Activated naive CD4-positive, alpha-beta T cell treated with anti-CD3 and anti-CD28 coated beads for 36 hours (primary cell): ENCODE measurements at regions of chr14 and their contacts with region 1.

Region 1: DNA sequence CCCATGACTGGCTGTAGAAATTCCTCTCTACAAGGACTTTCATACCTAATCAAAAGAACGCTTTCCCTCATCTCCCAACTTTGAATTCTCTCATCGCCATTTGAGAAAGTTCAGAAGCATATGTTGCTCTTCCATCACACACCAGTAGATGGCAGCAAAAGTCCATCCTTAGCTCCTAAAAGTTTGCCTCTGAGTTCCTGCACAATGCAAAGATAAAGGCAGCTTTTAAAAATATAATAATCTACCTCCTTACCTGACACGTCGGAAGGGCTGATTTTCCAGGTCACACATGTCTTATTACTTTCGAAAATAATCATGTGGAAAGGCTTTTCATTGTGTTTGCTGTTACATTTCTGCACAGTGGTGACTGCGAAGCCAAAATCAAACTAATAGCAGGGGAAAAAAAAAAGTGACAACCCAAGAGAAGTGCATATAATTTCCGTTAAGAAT is 456.7 kb upstream of the SEL1L start:
- DNase-seq: peak; percentile 63
- H3K4me3 Mint-ChIP-seq: no peak overlapping the region
- H3K27ac Mint-ChIP-seq: no peak overlapping the region
- H3K4me1 Mint-ChIP-seq: no peaks in the 10 kb centered on the region
- H3K27me3 Mint-ChIP-seq: peaks cover 11% of the 10 kb centered on the region

Region 2: GRCh38 chr14:81565441-81566290 is 424.7 kb before region 1 on chr14:
- CTCF ChIA-PET with region 1: no interaction called
- intact Hi-C with region 1: loop called (anchors 5 kb)
- DNase-seq: peak; percentile 57
- H3K4me3 Mint-ChIP-seq: no peak overlapping the region
- H3K27ac Mint-ChIP-seq: no peak overlapping the region
- H3K4me1 Mint-ChIP-seq: no peaks in the 10 kb centered on the region
- H3K27me3 Mint-ChIP-seq: peaks cover 8% of the 10 kb centered on the region

Region 3: GRCh38 chr14:81625343-81625742 is 365.0 kb before region 1 on chr14:
- CTCF ChIA-PET with region 1: no interaction called
- intact Hi-C with region 1: loop called (anchors 5 kb)
- DNase-seq: no peak
- H3K4me3 Mint-ChIP-seq: no peak overlapping the region
- H3K27ac Mint-ChIP-seq: no peak overlapping the region
- H3K4me1 Mint-ChIP-seq: no peaks in the 10 kb centered on the region
- H3K27me3 Mint-ChIP-seq: peaks cover 9% of the 10 kb centered on the region

Region 4: GRCh38 chr14:81710234-81710845 is 280.0 kb before region 1 on chr14:
- CTCF ChIA-PET with region 1: interaction called, 3 read pairs
- intact Hi-C with region 1: loop called (anchors 5 kb)
- DNase-seq: peak; percentile 28
- H3K4me3 Mint-ChIP-seq: no peak overlapping the region
- H3K27ac Mint-ChIP-seq: no peak overlapping the region
- H3K4me1 Mint-ChIP-seq: no peaks in the 10 kb centered on the region
- H3K27me3 Mint-ChIP-seq: no peaks in the 10 kb centered on the region

Region 5: DNA sequence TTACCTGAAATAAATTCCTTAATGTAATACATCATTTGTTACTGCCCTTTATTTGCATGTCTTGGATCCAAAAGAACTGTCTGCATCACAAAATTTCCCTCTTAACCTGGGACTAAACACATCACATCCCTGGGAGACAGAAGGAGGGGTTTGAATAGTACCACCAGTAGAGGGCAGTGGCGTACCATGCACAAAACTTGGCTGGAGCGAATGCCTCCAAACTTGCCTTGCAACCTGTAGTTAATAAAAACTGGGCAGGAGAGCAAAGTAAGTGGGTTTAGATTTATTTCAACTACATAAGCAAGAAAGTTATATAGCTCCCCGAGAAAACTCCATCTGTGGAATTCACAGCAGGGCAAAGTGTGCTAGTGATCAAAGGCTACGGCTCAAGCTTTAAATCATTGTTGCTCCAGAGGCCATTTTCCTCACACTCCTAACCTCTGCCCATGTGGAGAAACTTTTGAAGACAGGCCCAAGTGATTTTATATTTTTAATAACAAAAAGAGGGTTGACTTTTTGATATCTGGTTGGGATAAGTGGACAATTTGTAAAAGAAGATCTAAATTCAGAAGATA is 720.0 kb after region 1 on chr14:
- CTCF ChIA-PET with region 1: no interaction called
- intact Hi-C with region 1: loop called (anchors 1 kb)
- DNase-seq: peak; percentile 61
- H3K4me3 Mint-ChIP-seq: no peak overlapping the region
- H3K27ac Mint-ChIP-seq: no peak overlapping the region
- H3K4me1 Mint-ChIP-seq: no peaks in the 10 kb centered on the region
- H3K27me3 Mint-ChIP-seq: no peaks in the 10 kb centered on the region

Region 6: DNA sequence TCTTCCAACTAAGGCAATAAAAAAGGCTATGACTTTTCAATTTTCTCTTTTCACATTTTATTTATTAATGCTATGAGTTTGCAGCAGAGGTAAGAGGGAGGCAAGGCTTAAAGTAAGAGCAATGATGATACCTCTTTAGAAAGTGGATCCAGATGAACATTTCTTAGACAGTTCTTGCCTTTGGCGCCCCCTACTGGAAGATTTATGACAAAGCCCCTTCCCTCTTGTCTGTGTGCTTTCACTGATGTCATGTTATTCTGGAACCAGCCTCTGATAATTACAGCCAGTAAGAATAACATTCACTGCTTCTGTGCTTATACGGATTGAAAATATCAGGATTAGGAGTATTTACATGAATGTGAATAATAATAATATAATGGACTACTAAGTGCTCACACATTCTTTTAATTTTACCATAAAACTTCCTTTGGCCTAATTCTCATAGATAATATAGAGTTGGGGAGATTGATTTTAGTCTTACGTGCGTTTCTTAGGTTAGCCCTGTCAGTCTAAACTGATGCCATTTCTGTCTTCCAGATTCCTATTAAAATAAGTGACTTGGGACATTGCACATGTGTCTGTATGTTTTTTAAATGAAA is 1473.3 kb after region 1 on chr14:
- CTCF ChIA-PET with region 1: no interaction called
- intact Hi-C with region 1: loop called (anchors 10 kb)
- DNase-seq: peak; percentile 22
- H3K4me3 Mint-ChIP-seq: no peak overlapping the region
- H3K27ac Mint-ChIP-seq: no peak overlapping the region
- H3K4me1 Mint-ChIP-seq: no peaks in the 10 kb centered on the region
- H3K27me3 Mint-ChIP-seq: no peaks in the 10 kb centered on the region